GM12878 (cell line): ENCODE measurements at regions of chr12 and their contacts with region 1.

Region 1: DNA sequence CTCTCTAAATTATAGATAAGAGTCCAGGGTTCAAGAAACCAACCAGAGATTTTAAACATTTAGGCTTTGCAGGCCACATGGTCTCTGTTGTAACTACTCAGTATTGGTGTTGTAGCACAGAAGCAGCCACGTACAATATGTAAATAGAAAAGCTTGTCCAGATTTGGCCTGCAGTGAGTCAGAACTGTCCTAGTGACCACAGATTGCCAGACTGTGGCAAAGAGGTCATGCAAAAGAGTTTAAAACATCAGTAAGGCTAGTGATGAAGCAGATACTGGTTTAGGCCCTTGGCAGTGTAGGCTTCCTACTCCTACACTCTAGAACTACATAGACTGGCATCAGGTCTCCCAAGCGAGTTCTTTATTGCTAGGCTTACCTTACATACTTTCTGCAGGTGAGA is 117.6 kb upstream of the GARIN6 start:
- DNase-seq: peak; percentile 62
- ATAC-seq: peak; percentile 96
- H3K4me3 ChIP-seq: no peak overlapping the region
- H3K27ac ChIP-seq: no peak overlapping the region
- H3K4me1 ChIP-seq: no peaks in the 10 kb centered on the region
- H3K27me3 ChIP-seq: no peaks in the 10 kb centered on the region
- CTCF ChIP-seq: no peak
- EP300 ChIP-seq: peak; percentile 27 to 28; a peak in 1 of 4 replicates
- POLR2A ChIP-seq: no peak
- RAD21 ChIP-seq: no peak

Region 2: GRCh38 chr12:99436584-99436983 is 93.4 kb before region 1 on chr12:
- CTCF ChIA-PET with region 1: no interaction called
- POLR2A ChIA-PET with region 1: no interaction called
- RAD21 ChIA-PET with region 1: no interaction called
- SMC1A ChIA-PET with region 1: no interaction called
- in situ Hi-C with region 1: no loop called
- intact Hi-C with region 1: loop called (anchors 2 kb)
- DNase-seq: peak; percentile 73
- ATAC-seq: peak; percentile 94
- H3K4me3 ChIP-seq: no peak overlapping the region
- H3K27ac ChIP-seq: no peak overlapping the region; the same call in 1 of the 2 replicates
- H3K4me1 ChIP-seq: no peaks in the 10 kb centered on the region
- H3K27me3 ChIP-seq: no peaks in the 10 kb centered on the region
- CTCF ChIP-seq: no peak
- EP300 ChIP-seq: peak; percentile 92 to 99
- POLR2A ChIP-seq: no peak
- RAD21 ChIP-seq: no peak

Region 3: GRCh38 chr12:99513066-99513465 is 16.9 kb before region 1 on chr12:
- CTCF ChIA-PET with region 1: no interaction called
- POLR2A ChIA-PET with region 1: no interaction called
- RAD21 ChIA-PET with region 1: no interaction called
- SMC1A ChIA-PET with region 1: no interaction called
- in situ Hi-C with region 1: no loop called
- intact Hi-C with region 1: no loop called
- DNase-seq: no peak
- ATAC-seq: no peak
- H3K4me3 ChIP-seq: no peak overlapping the region
- H3K27ac ChIP-seq: no peak overlapping the region
- H3K4me1 ChIP-seq: no peaks in the 10 kb centered on the region
- H3K27me3 ChIP-seq: no peaks in the 10 kb centered on the region
- CTCF ChIP-seq: no peak
- EP300 ChIP-seq: no peak
- POLR2A ChIP-seq: no peak
- RAD21 ChIP-seq: no peak

Region 4: DNA sequence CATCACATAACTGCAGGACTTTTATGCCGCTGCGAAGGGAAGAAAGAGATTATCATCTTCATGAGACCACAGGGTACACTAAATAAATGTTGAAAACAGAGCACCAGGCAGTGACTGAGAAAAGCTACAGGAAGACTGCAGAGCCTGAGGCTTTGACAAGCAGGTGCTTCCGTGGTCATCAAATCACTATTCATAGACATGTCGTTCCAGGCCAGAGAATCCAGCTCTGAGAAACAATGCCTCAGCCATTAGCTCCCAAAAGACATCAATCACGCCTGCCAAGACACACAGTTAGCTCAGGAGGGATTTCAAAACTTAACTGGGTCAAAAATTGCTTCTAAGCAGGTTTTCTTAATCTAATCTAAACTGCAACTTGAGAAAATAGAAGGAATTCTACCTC is 70.4 kb after region 1 on chr12:
- CTCF ChIA-PET with region 1: no interaction called
- POLR2A ChIA-PET with region 1: no interaction called
- RAD21 ChIA-PET with region 1: no interaction called
- SMC1A ChIA-PET with region 1: no interaction called
- in situ Hi-C with region 1: no loop called
- intact Hi-C with region 1: no loop called
- DNase-seq: peak; percentile 37
- ATAC-seq: peak; percentile 80
- H3K4me3 ChIP-seq: no peak overlapping the region
- H3K27ac ChIP-seq: no peak overlapping the region
- H3K4me1 ChIP-seq: no peaks in the 10 kb centered on the region
- H3K27me3 ChIP-seq: no peaks in the 10 kb centered on the region
- CTCF ChIP-seq: no peak
- EP300 ChIP-seq: no peak
- POLR2A ChIP-seq: no peak
- RAD21 ChIP-seq: no peak

Region 5: DNA sequence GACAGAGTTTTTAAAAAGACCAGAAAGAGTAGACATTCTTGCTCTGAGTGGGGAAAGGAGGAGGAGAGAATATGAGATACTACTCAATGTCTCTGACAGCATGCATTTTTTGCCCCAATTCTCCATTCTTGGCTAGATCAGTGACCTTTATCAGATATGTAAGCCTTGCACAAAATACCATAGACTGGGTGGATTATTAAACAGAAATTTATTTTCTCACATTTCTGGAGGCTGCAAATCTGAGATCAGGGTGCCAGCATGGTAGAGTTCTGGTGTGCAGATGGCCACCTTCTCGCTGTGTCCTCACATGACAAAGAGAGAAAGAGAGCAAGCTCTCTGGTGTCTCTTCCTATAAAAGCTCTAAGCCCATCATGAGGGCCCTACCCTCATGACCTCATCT is 416.2 kb after region 1 on chr12:
- CTCF ChIA-PET with region 1: no interaction called
- POLR2A ChIA-PET with region 1: no interaction called
- RAD21 ChIA-PET with region 1: no interaction called
- SMC1A ChIA-PET with region 1: no interaction called
- in situ Hi-C with region 1: no loop called
- intact Hi-C with region 1: no loop called
- DNase-seq: no peak
- ATAC-seq: no peak
- H3K4me3 ChIP-seq: no peak overlapping the region
- H3K27ac ChIP-seq: no peak overlapping the region
- H3K4me1 ChIP-seq: no peaks in the 10 kb centered on the region
- H3K27me3 ChIP-seq: no peaks in the 10 kb centered on the region
- CTCF ChIP-seq: no peak
- EP300 ChIP-seq: no peak
- POLR2A ChIP-seq: no peak
- RAD21 ChIP-seq: no peak